Breast epithelium (tissue), 4 donors: ENCODE measurements at regions of chr1 and their contacts with region 1.

Region 1: GRCh38 chr1:152481869-152482664 is 28.5 kb upstream of the LCE5A start:
- DNase-seq: no peak
- H3K4me3 ChIP-seq: no peak overlapping the region
- H3K27ac ChIP-seq: no peak overlapping the region
- H3K4me1 ChIP-seq: no peaks in the 10 kb centered on the region
- H3K27me3 ChIP-seq: no peaks in the 10 kb centered on the region
- CTCF ChIP-seq: no peak
- POLR2A ChIP-seq: no peak

Region 2: GRCh38 chr1:150642296-150642695 is 1839.8 kb before region 1 on chr1:
- intact Hi-C with region 1: no loop called
- DNase-seq: no peak
- H3K4me3 ChIP-seq: no peak overlapping the region
- H3K27ac ChIP-seq: no peak overlapping the region
- H3K4me1 ChIP-seq: no peaks in the 10 kb centered on the region
- H3K27me3 ChIP-seq: no peaks in the 10 kb centered on the region
- CTCF ChIP-seq: no peak
- POLR2A ChIP-seq: no peak

Region 3: GRCh38 chr1:152501699-152502098 is 19.6 kb after region 1 on chr1:
- intact Hi-C with region 1: loop called (anchors 1 kb)
- DNase-seq: no peak
- H3K4me3 ChIP-seq: no peak overlapping the region
- H3K27ac ChIP-seq: no peak overlapping the region
- H3K4me1 ChIP-seq: no peaks in the 10 kb centered on the region
- H3K27me3 ChIP-seq: no peaks in the 10 kb centered on the region
- CTCF ChIP-seq: no peak
- POLR2A ChIP-seq: no peak